MCF 10A (cell line): ENCODE measurements at regions of chr10 and their contacts with region 1.

Region 1: GRCh38 chr10:132387764-132388210 is 9.2 kb upstream of the PWWP2B start:
- DNase-seq: peak; percentile 44
- H3K4me3 Mint-ChIP-seq: no peak overlapping the region
- H3K27ac Mint-ChIP-seq: no peak overlapping the region
- H3K4me1 Mint-ChIP-seq: no peaks in the 10 kb centered on the region
- H3K27me3 Mint-ChIP-seq: no peaks in the 10 kb centered on the region
- CTCF ChIP-seq: peak; percentile 56

Region 2: DNA sequence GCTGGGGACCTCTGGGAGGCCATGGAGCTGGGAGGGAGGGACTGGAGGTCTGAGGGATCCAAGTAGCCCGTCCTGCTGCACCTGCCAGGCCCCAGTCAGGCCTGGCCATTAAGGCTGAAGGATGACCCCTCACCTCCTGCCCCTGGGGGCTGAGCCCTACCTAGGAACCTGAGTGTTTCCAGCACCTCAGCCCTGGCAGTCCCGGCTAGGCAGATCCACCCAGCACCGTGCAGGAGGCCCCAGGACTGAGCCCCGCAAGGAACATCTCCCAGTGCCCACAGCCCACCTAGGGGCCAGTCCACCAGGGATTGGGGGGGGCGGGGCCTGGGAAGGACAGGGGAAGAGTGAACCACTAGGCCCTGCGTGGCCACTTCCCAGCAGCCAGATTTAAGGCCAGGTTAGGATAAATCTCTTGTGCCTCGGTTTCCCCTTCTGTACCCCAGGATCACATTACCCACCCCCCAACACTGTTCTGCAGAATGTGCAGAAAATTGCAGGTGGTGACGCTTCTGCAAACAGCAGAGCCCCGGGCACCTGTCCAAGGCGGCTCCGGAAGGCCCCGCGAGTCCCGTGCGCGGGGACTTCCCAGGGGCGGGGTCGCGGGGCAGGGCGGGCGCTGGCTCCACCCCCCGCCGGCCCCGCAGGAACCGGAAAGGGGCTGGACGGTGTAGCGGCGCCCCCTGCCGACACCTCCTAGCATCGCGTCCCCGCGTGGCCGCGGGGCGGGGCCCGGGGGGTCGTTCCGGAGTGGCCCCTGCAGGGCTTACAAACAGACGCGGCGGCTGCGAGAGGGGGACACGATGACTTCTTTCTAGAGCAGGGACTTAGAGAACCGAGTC is 65.1 kb after region 1 on chr10:
- CTCF ChIA-PET with region 1: interaction called, 19 read pairs
- POLR2A ChIA-PET with region 1: no interaction called
- intact Hi-C with region 1: loop called (anchors 1 kb)
- DNase-seq: peak; percentile 73
- H3K4me3 Mint-ChIP-seq: peak overlapping the region; percentile 6
- H3K27ac Mint-ChIP-seq: no peak overlapping the region
- H3K4me1 Mint-ChIP-seq: peaks cover 11% of the 10 kb centered on the region
- H3K27me3 Mint-ChIP-seq: no peaks in the 10 kb centered on the region
- CTCF ChIP-seq: peak; percentile 98

Region 3: GRCh38 chr10:132520177-132520811 is 132.5 kb after region 1 on chr10:
- CTCF ChIA-PET with region 1: no interaction called
- POLR2A ChIA-PET with region 1: no interaction called
- intact Hi-C with region 1: no loop called
- DNase-seq: no peak
- H3K4me3 Mint-ChIP-seq: no peak overlapping the region
- H3K27ac Mint-ChIP-seq: no peak overlapping the region
- H3K4me1 Mint-ChIP-seq: no peaks in the 10 kb centered on the region
- H3K27me3 Mint-ChIP-seq: no peaks in the 10 kb centered on the region
- CTCF ChIP-seq: no peak

Region 4: DNA sequence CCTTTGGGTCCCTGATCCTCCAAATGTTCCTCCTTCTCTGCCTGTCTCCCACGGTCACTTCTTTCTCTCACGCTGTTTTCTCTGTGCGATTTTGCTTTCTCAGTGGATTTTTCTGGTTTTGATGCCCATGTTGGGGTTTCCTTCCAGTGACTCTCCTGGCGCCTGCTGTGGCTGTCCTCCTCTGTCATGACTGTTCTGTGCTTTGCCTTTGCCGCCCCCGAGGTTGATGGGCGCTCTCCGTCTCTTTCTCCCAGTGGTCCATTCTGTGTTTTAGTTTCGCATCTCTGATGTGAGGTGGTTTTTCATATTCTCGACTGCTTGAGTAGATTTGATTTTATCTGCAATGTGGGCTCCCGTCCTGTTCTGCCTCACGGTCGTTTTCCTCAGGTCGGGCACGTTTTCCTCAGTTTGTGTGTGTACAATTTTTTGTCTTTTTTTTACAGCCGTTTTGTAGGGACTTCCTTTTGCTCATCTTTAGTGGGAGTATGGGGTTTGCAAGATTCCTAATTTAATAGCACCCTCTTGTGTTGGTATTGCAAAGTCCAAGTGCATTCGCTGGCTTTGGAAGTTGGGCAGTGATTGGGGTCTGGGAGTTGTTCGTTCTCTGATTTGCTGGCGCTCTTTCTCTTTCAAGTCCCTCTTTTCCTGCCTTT is 249.8 kb after region 1 on chr10:
- CTCF ChIA-PET with region 1: interaction called, 4 read pairs
- POLR2A ChIA-PET with region 1: no interaction called
- intact Hi-C with region 1: loop called (anchors 5 kb)
- DNase-seq: peak; percentile 63
- H3K4me3 Mint-ChIP-seq: no peak overlapping the region
- H3K27ac Mint-ChIP-seq: peak overlapping the region; percentile 36
- H3K4me1 Mint-ChIP-seq: peaks cover 24% of the 10 kb centered on the region
- H3K27me3 Mint-ChIP-seq: no peaks in the 10 kb centered on the region
- CTCF ChIP-seq: peak; percentile 75

Region 5: DNA sequence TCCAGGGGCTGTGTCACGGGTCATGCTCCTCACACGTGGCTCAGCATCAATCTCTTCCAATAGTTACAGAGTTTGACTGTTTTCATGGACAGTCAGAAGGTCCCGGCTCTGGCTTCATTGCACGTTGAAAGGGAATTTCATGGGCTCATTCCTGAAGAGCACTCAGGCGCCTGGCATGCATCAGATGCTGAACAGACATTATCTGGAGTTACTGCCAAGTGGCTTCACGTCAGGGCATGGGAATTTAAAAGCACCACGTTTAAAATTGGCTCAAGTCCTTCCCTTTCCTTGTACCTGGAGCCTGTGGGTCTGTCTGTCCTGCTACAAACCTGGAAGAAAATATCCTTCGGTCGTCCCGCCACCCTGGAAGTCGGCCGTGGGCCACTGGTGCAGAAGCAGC is 504.2 kb after region 1 on chr10:
- CTCF ChIA-PET with region 1: no interaction called
- POLR2A ChIA-PET with region 1: no interaction called
- intact Hi-C with region 1: no loop called
- DNase-seq: no peak
- H3K4me3 Mint-ChIP-seq: no peak overlapping the region
- H3K27ac Mint-ChIP-seq: no peak overlapping the region
- H3K4me1 Mint-ChIP-seq: no peaks in the 10 kb centered on the region
- H3K27me3 Mint-ChIP-seq: peaks cover 51% of the 10 kb centered on the region
- CTCF ChIP-seq: no peak